ENCODE measurements at regions of chr1 and their contacts with region 1.

Region 1: GRCh38 chr1:156838981-156839410 is 19.9 kb downstream of the INSRR start:
- DNase-seq: peak in 4 of 5 donors; percentile 52 to 66 (median 55)
- H3K4me3 ChIP-seq: no peak overlapping the region
- H3K4me3 Mint-ChIP-seq: no peak overlapping the region
- H3K27ac ChIP-seq: no peak overlapping the region
- H3K27ac Mint-ChIP-seq: peak overlapping the region in 6 of 7 donors; percentile 5 to 81 (median 54)
- H3K4me1 ChIP-seq: peaks cover 12% of the 10 kb centered on the region
- H3K4me1 Mint-ChIP-seq: peaks cover 4 to 24% (median 10%) of the 10 kb centered on the region in 4 donors
- H3K27me3 ChIP-seq: peaks cover 11% of the 10 kb centered on the region
- H3K27me3 Mint-ChIP-seq: peaks cover 16 to 45% of the 10 kb centered on the region in 2 donors

Region 2: GRCh38 chr1:156797212-156797871 is 41.7 kb before region 1 on chr1:
- CTCF ChIA-PET with region 1: interaction called, 50 read pairs
- POLR2A ChIA-PET with region 1: no interaction called
- intact Hi-C with region 1: loop called (anchors 1 kb)
- DNase-seq: peak; percentile 66 to 75 (median 74)
- H3K4me3 ChIP-seq: no peak overlapping the region
- H3K4me3 Mint-ChIP-seq: no peak overlapping the region
- H3K27ac ChIP-seq: no peak overlapping the region
- H3K27ac Mint-ChIP-seq: peak overlapping the region in 6 of 7 donors; percentile 12 to 45 (median 24)
- H3K4me1 ChIP-seq: peaks cover 17% of the 10 kb centered on the region
- H3K4me1 Mint-ChIP-seq: peaks cover 18 to 30% (median 21%) of the 10 kb centered on the region in 4 donors
- H3K27me3 ChIP-seq: no peaks in the 10 kb centered on the region
- H3K27me3 Mint-ChIP-seq: no peaks in the 10 kb centered on the region

Region 3: GRCh38 chr1:156821801-156822200 is 17.2 kb before region 1 on chr1:
- CTCF ChIA-PET with region 1: interaction called, 43 read pairs
- POLR2A ChIA-PET with region 1: interaction called, 4 read pairs
- intact Hi-C with region 1: loop called (anchors 2 kb)
- DNase-seq: no peak
- H3K4me3 ChIP-seq: no peak overlapping the region
- H3K4me3 Mint-ChIP-seq: no peak overlapping the region
- H3K27ac ChIP-seq: no peak overlapping the region
- H3K27ac Mint-ChIP-seq: peak overlapping the region in 2 of 7 donors; percentile 13 to 49
- H3K4me1 ChIP-seq: peaks cover 13% of the 10 kb centered on the region
- H3K4me1 Mint-ChIP-seq: peaks cover 7 to 20% (median 12%) of the 10 kb centered on the region in 4 donors
- H3K27me3 ChIP-seq: no peaks in the 10 kb centered on the region
- H3K27me3 Mint-ChIP-seq: peaks cover 0 to 3% of the 10 kb centered on the region in 2 donors

Region 4: GRCh38 chr1:156852418-156852874 is 13.4 kb after region 1 on chr1:
- CTCF ChIA-PET with region 1: interaction called, 204 read pairs
- POLR2A ChIA-PET with region 1: interaction called, 6 read pairs
- intact Hi-C with region 1: no loop called
- DNase-seq: no peak
- H3K4me3 ChIP-seq: no peak overlapping the region
- H3K4me3 Mint-ChIP-seq: no peak overlapping the region
- H3K27ac ChIP-seq: no peak overlapping the region
- H3K27ac Mint-ChIP-seq: no peak overlapping the region
- H3K4me1 ChIP-seq: peaks cover 13% of the 10 kb centered on the region
- H3K4me1 Mint-ChIP-seq: peaks cover 2 to 18% (median 14%) of the 10 kb centered on the region in 4 donors
- H3K27me3 ChIP-seq: no peaks in the 10 kb centered on the region
- H3K27me3 Mint-ChIP-seq: peaks cover 2 to 4% of the 10 kb centered on the region in 2 donors

Measured in CD4-positive, alpha-beta memory T cell (primary cell).